Psoas muscle (tissue), 8 donors: ENCODE measurements at regions of chr3 and their contacts with region 1.

Region 1: DNA sequence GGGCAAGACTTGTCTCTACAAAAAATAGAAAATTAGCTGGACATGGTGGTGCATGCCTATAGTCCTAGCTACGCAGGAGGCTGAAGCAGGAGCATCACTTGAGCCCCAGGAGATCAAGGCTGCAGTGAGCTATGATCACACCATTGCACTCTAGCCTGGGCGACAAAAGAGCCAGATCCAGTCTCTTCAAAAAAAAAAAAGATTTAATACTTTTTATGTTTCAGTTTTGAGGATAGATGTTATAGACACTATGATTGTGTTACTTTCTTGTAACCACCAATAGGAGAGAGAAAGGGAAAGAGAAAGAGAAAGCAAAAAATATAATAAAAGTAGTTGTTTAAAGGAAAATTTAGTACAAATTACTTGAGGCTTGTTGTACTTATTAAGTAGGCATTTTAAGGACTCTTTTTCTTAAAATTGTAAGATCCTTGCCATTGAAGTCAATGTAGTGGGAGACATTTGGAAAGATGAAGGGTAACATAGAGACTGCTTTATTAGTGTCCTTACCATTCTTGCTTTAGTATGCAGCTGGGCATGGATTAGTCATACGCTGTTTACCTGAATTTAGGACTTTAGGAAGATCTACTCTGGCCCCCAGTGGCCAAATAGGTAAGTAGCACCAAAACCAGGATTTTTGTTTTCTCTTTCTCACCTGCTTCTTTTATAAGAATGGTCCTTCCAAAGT is 35.1 kb upstream of the ZDHHC23 start:
- DNase-seq: no peak
- ATAC-seq: peak in 3 of 4 donors; percentile 53 to 74 (median 60)
- H3K4me3 ChIP-seq: no peak overlapping the region
- H3K27ac ChIP-seq: no peak overlapping the region
- H3K4me1 ChIP-seq: no peaks in the 10 kb centered on the region
- H3K27me3 ChIP-seq: no peaks in the 10 kb centered on the region
- CTCF ChIP-seq: peak; percentile 51

Region 2: DNA sequence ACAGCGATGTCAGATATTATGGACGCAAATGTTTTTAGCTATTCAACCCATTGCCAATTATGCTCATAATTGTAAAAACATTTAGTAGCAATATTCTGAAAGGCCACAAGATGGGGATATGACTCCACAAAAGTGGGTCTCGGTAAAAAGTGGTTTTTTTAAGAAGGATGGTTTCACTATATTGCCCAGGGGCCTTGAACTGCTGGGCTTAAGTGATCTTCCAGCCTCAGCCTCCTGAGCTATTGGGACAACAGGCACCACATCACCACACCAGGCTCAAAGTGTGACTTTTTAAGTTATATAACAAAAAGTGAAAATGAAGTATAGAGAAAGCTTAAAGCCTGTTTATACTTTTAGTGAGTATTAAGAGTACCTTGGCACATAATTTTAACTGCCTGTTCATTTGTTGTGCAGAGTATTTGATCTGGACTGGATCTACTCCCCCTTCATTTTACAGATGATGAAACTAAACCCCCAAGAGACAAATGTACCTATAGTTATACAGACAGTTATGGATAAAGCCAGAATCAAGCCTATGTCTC is 176.1 kb before region 1 on chr3:
- intact Hi-C with region 1: loop called in 1 of 2 experiments (anchors 10 kb)
- DNase-seq: no peak
- ATAC-seq: peak; percentile 48 to 67 (median 61)
- H3K4me3 ChIP-seq: peak overlapping the region; percentile 16
- H3K27ac ChIP-seq: peak overlapping the region; percentile 34
- H3K4me1 ChIP-seq: peaks cover 87% of the 10 kb centered on the region
- H3K27me3 ChIP-seq: no peaks in the 10 kb centered on the region
- CTCF ChIP-seq: peak; percentile 68

Region 3: DNA sequence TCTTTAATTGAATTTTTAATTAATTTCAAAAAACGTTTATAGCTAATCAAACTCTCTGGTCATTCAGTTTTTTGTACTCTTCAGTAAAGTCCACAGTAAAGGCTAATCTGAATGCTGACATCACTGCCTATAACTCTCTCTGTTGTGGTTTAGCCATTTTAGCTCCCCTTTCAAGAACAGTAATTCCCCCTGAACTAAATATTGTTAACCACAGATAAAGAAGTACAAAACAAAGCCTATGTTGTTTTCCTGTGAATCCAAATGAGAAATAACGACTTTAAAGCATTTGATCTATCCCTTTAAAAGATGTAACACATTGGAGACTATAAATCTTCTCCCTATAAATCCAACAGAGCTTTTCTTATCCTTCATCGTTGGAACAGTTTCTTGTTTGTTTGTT is 1140.2 kb after region 1 on chr3:
- intact Hi-C with region 1: no loop called
- DNase-seq: no peak
- ATAC-seq: no peak
- H3K4me3 ChIP-seq: no peak overlapping the region
- H3K27ac ChIP-seq: no peak overlapping the region
- H3K4me1 ChIP-seq: no peaks in the 10 kb centered on the region
- H3K27me3 ChIP-seq: no peaks in the 10 kb centered on the region
- CTCF ChIP-seq: no peak